Left cardiac atrium (tissue), 4 donors: ENCODE measurements at regions of chr17 and their contacts with region 1.

Region 1: DNA sequence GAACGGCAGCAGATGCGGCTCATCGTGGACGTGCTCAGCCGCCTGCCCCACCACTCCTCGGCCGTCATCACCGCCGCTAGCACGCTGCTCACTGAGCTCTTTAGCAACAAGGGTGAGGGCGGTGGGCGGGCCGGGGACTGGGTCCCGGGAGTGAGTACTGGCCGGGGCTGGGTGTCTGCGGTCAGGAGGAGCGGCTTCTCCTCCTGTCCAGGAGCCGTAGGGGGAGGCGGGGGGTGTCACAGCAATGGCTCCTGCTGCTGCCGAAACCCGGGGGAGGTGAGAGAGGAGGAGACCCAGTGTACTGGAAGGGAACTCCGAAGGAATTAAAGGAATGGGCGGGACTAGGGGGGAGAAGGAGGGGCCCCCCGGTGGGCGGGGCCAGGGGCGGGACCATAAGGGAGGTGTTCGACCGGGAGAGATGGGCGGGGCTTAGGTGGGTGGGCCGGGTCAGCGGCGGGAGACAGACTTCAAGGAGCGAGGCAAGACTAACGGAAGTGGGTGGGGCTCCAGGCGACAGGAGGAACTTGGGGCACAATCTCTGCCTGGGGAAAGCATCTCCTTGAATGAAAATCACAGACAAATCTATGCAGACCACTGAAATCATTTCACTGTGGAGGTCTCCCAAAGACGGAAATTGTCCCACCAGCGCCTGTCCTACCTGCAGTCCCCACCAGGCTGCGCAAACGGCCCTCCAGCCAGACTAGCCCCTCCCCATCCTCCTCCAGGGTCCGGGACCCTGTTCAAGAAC is 2.4 kb downstream of the NAGS start:
- DNase-seq: peak; percentile 99
- ATAC-seq: peak; percentile 93 to 95

Region 2: GRCh38 chr17:44044067-44044466 is 37.3 kb after region 1 on chr17:
- intact Hi-C with region 1: loop called in 1 of 2 experiments (anchors 5 kb)
- DNase-seq: no peak
- ATAC-seq: no peak